Aorta (tissue), 5 donors: ENCODE measurements at regions of chr1 and their contacts with region 1.

Region 1: GRCh38 chr1:63917571-63918417 is 144.0 kb downstream of the ROR1 start:
- DNase-seq: no peak
- ATAC-seq: peak; percentile 33
- H3K4me3 ChIP-seq: no peak overlapping the region
- H3K27ac ChIP-seq: peak overlapping the region; percentile 29 to 98
- H3K4me1 ChIP-seq: peaks cover 7 to 9% of the 10 kb centered on the region in 2 donors
- H3K27me3 ChIP-seq: no peaks in the 10 kb centered on the region

Region 2: DNA sequence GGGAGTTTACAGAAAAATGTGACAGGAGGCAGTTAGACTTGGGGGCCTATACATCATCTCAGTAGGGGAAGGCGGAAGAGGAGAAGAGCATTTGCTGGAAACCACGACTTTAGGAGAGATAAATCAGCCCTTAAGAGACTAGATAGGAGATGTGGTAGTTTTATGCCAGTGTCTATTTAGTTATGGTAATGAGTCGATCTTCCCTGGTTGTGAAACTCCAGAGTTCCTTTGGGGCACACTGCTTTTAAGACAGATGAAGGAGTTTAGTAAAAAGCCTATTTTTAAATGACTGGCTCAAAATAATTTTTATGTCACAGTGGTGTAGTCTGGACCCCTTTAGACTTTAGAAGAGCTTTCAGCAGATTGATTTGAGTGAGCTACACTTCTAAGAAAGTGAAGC is 316.7 kb before region 1 on chr1:
- intact Hi-C with region 1: no loop called
- DNase-seq: no peak
- ATAC-seq: no peak
- H3K4me3 ChIP-seq: no peak overlapping the region
- H3K27ac ChIP-seq: no peak overlapping the region
- H3K4me1 ChIP-seq: peaks cover 0 to 2% of the 10 kb centered on the region in 2 donors
- H3K27me3 ChIP-seq: no peaks in the 10 kb centered on the region

Region 3: DNA sequence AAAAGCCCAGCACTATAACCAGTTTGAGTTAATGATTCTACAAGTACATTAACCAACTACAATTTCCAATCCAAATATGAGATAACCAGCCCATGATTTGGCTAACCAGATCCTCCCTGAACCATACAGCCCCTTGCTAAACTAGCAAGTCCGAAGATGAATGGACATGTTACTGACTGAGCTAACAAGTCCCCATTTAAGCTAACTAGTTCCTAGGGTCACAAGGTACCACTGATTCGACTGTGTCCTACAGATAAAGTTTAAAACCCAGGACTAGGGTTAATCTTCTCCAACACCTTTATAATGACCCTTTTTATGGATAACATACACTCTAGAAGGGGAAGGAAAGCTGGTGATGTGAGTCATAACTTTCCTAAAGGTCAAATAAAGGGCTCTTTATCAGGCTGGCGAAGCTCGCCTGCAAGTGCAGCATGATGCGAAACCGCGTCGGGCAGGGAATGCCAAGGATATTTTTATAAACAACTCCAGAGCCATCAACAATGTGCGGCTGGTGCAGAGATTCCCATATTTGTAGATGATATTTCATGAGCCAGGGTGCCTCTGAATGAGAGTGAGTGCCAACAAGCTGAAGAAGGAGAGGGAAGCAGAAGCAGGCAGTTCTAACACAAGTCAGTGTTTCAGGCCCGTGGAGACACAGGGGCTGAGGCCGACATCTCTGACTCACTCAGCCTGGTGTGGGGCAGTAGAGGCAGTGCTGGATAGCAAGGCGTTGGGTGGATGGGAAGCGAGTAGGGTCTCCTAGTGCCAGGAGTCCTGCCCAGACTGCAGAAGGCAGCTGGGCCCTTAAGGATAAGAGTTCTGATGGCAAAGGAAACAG is 219.6 kb before region 1 on chr1:
- intact Hi-C with region 1: loop called (anchors 5 to 10 kb)
- DNase-seq: peak; percentile 80 to 90
- ATAC-seq: peak; percentile 85
- H3K4me3 ChIP-seq: no peak overlapping the region
- H3K27ac ChIP-seq: peak overlapping the region; percentile 92 to 95
- H3K4me1 ChIP-seq: peaks cover 2 to 6% of the 10 kb centered on the region in 2 donors
- H3K27me3 ChIP-seq: no peaks in the 10 kb centered on the region

Region 4: GRCh38 chr1:63859480-63860270 is 58.1 kb before region 1 on chr1:
- intact Hi-C with region 1: loop called in 1 of 2 experiments (anchors 10 kb)
- DNase-seq: no peak
- ATAC-seq: no peak
- H3K4me3 ChIP-seq: no peak overlapping the region
- H3K27ac ChIP-seq: no peak overlapping the region
- H3K4me1 ChIP-seq: peaks cover 6 to 14% of the 10 kb centered on the region in 2 donors
- H3K27me3 ChIP-seq: no peaks in the 10 kb centered on the region

Region 5: GRCh38 chr1:63882048-63882704 is 35.6 kb before region 1 on chr1:
- intact Hi-C with region 1: loop called in 1 of 2 experiments (anchors 5 kb)
- DNase-seq: no peak
- ATAC-seq: peak; percentile 28
- H3K4me3 ChIP-seq: no peak overlapping the region
- H3K27ac ChIP-seq: no peak overlapping the region
- H3K4me1 ChIP-seq: peaks cover 6 to 20% of the 10 kb centered on the region in 2 donors
- H3K27me3 ChIP-seq: no peaks in the 10 kb centered on the region

Region 6: GRCh38 chr1:64062941-64063581 is 145.3 kb after region 1 on chr1:
- intact Hi-C with region 1: no loop called
- DNase-seq: no peak
- ATAC-seq: no peak
- H3K4me3 ChIP-seq: no peak overlapping the region
- H3K27ac ChIP-seq: no peak overlapping the region
- H3K4me1 ChIP-seq: peaks cover 0 to 10% of the 10 kb centered on the region in 2 donors
- H3K27me3 ChIP-seq: no peaks in the 10 kb centered on the region

Region 7: DNA sequence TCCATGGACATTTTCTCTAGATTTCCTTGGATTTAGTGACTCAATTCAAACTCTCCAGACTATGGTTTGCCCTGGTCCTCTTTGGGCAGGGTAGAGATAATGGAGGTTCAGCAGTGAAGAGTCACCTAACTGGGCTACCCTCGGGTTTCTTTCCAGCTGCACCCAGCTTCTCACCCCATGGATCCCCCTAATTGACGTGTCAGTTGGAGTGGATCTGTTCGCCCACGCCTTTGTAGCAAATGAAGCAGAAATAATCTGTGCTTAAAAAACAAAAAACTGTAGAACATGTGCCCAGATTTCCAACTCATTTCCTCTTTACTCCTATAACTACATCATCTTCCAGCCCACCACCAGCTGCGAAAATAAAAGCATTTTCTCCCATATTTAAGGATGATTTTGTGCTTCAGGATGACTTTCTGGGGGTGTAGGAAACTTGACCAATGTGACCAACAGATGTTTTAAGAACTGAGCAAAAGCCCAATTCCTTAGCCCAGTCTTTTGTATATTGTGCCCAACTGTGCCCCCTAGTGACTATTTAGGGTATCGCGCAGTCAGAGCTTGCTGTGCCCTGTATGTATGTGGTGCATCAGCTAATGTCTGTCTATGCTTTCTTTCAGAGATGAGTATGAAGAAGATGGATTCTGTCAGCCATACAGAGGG is 219.1 kb after region 1 on chr1:
- intact Hi-C with region 1: loop called in 1 of 2 experiments (anchors 5 kb)
- DNase-seq: peak; percentile 73 to 86
- ATAC-seq: peak; percentile 93
- H3K4me3 ChIP-seq: no peak overlapping the region
- H3K27ac ChIP-seq: no peak overlapping the region
- H3K4me1 ChIP-seq: peaks cover 0 to 4% of the 10 kb centered on the region in 2 donors
- H3K27me3 ChIP-seq: no peaks in the 10 kb centered on the region